Activated CD4-positive, alpha-beta memory T cell treated with anti-CD3 and anti-CD28 coated beads, Interleukin-2, amount 10 ng/mL, durations not matched to agents 7 days and 5 days (primary cell): ENCODE measurements at regions of chr6 and their contacts with region 1.

Region 1: DNA sequence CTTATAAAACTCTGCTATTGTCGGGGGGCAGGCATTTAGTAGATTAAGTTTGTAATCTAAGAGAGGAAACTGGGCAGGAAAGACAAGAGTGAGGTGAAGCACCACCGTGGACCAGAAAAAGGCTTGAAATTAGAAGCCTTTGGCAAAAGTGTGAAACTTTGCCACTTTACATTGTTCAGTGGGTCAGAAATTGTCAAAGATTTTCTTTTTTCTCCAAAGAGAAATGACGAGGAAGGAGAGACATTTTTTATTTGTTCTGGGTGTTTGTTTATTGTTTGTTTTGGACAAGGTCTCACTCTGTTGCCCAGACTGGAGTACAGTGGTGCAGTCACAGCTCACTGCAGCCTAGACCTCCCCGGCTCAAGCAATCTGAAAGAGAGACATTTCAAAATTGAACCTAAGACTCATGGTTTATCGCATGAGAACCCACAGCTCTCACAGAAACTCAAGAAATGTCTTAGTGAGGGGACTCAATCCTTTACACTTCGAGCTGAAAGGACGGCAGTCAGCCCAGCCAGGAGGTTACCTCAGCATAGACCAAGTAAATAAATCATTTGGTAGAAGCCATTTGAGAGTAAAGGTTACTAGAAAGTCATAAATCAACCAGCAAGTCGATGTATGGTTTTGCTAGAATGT is 262.8 kb upstream of the TAB2 start:
- DNase-seq: no peak
- H3K4me3 Mint-ChIP-seq: no peak overlapping the region
- H3K27ac Mint-ChIP-seq: no peak overlapping the region
- H3K4me1 Mint-ChIP-seq: peaks cover 53% of the 10 kb centered on the region
- H3K27me3 Mint-ChIP-seq: no peaks in the 10 kb centered on the region

Region 2: GRCh38 chr6:149020319-149020718 is 34.4 kb before region 1 on chr6:
- CTCF ChIA-PET with region 1: no interaction called
- POLR2A ChIA-PET with region 1: no interaction called
- DNase-seq: no peak
- H3K4me3 Mint-ChIP-seq: no peak overlapping the region
- H3K27ac Mint-ChIP-seq: no peak overlapping the region
- H3K4me1 Mint-ChIP-seq: no peaks in the 10 kb centered on the region
- H3K27me3 Mint-ChIP-seq: no peaks in the 10 kb centered on the region

Region 3: GRCh38 chr6:149065658-149066556 is 11.2 kb after region 1 on chr6:
- CTCF ChIA-PET with region 1: interaction called, 5 read pairs
- POLR2A ChIA-PET with region 1: interaction called, 12 read pairs
- DNase-seq: peak; percentile 38
- H3K4me3 Mint-ChIP-seq: peak overlapping the region; percentile 12
- H3K27ac Mint-ChIP-seq: peak overlapping the region; percentile 89
- H3K4me1 Mint-ChIP-seq: peaks cover 53% of the 10 kb centered on the region
- H3K27me3 Mint-ChIP-seq: no peaks in the 10 kb centered on the region

Region 4: DNA sequence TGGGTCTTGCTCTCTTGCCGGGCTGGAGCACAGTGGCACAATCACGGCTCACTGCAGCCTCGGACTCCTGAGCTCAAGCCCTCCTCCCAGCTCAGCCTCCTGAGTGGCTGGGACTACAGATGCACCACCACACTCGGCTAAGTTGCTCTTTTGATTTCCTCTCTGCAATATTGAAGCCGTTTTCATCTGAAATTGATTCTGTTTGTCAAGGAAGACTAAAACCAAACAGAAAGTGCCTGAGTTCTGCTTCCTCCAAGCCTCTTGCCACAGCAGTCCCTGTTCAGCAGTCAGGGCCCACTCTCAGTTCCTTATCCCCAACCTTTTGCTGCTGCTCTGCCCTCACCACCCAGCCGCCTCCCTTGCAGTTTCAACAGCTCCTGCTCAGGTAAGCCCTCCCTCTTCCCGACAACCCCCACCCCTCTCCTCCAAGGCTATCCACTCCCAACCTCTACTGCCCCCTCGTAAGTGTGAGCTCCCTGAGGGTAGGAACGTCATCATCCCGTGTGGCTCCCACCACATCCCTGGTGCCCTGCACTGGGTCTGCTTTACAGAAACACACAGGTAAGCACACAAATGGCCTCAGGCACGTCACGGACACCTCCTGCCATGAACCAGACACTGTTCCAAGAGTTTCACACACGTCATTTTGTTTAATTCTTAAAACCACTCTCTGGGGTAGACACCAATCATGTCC is 192.2 kb after region 1 on chr6:
- CTCF ChIA-PET with region 1: no interaction called
- POLR2A ChIA-PET with region 1: no interaction called
- DNase-seq: no peak
- H3K4me3 Mint-ChIP-seq: no peak overlapping the region
- H3K27ac Mint-ChIP-seq: no peak overlapping the region
- H3K4me1 Mint-ChIP-seq: peaks cover 30% of the 10 kb centered on the region
- H3K27me3 Mint-ChIP-seq: no peaks in the 10 kb centered on the region